T-cell (primary cell): ENCODE measurements at regions of chr19 and their contacts with region 1.

Region 1: DNA sequence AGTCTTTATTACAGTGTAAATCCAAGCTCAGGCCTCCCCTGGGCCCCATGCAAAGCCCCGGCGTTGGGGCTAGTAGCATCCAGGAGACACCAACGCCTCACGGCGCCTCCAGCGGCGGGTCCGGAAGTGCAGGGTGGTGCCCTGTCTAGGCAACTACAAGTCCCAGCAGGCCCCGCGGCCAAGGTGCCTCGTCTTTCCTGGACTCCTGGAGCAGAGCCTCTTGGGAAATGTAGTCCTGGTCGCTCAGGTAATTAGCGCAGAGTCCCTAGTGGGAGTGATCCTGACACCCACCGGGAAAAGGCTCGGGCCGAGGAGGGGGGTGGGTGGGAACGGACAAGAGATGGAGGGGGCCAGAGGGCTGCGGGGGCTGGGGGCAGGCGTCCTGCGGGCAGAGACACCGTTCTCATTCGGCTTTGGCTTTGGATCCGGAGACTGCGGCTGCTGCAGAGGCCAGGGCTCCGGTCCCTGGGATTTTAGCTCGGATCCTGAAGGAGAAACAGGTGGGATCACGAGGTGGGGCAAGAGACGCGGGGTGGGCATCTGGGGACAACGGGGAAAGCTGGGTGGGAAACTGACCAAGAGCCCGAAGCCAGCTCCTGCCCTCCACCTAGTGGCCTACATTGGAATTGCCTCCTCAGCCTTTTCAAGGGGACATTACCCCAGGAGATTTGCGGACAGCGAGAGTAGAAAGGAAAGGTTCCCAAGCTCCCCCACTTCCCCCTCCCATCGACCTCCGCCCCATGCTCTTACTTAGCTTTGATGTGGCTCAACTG is 11.4 kb downstream of the RTN2 start:
- DNase-seq: peak; percentile 91 to 99 (median 97)
- ATAC-seq: peak; percentile 93 to 100 (median 99)
- H3K4me3 ChIP-seq: peak overlapping the region; percentile 69 to 77
- H3K4me3 Mint-ChIP-seq: peak overlapping the region; percentile 86 to 90 (median 87)
- H3K27ac ChIP-seq: no peak overlapping the region
- H3K27ac Mint-ChIP-seq: peak overlapping the region in 1 of 2 donors; percentile 66
- H3K4me1 ChIP-seq: peaks cover 0 to 13% of the 10 kb centered on the region in 2 experiments
- H3K4me1 Mint-ChIP-seq: peaks cover 0 to 7% (median 2%) of the 10 kb centered on the region in 3 donors
- H3K27me3 ChIP-seq: peaks cover 0 to 14% of the 10 kb centered on the region in 2 experiments
- H3K27me3 Mint-ChIP-seq: peaks cover 0 to 1% of the 10 kb centered on the region in 2 donors

Region 2: DNA sequence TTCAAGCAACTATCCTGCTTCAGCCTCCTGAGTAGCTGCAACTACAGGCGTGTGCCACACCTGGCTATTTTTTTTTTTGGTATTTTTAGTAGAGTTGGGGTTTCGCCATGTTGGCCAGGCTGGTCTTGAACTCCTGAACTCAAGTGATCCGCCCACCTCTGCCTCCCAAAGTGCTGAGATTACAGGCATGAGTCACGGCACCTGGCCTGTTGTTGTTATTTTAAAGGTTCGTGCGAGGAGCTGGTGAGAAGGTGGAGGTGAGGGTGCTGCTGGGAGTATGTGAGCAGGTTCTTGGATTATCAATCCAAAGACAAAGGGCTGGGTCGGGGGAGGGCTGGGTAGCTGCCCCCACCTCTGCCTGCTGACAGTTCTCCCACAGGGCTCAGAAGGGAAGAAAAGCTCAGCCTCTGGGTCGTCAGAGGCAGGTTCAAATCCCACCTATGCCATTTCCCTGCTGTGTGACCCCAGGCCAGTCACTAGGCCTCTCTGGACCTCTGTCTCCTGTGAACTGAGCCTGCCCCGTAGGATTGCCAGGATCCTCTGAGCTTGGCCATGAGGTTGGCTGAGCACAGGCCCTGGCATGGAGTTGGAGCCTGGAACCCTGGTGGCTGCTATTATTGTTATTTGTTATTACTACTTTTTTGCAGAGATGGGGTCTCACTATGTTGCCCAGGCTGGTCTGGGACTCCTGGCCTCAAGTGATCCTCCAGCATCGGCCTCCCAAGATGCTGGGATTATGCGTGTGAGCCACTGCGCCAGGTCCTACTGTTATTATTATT is 164.3 kb before region 1 on chr19:
- CTCF ChIA-PET with region 1: no interaction called
- POLR2A ChIA-PET with region 1: no interaction called
- DNase-seq: no peak
- ATAC-seq: no peak
- H3K4me3 ChIP-seq: no peak overlapping the region
- H3K4me3 Mint-ChIP-seq: no peak overlapping the region
- H3K27ac ChIP-seq: no peak overlapping the region
- H3K27ac Mint-ChIP-seq: no peak overlapping the region
- H3K4me1 ChIP-seq: peaks cover 0 to 10% of the 10 kb centered on the region in 2 experiments
- H3K4me1 Mint-ChIP-seq: no peaks in the 10 kb centered on the region
- H3K27me3 ChIP-seq: peaks cover 0 to 78% of the 10 kb centered on the region in 2 experiments
- H3K27me3 Mint-ChIP-seq: peaks cover 32 to 60% of the 10 kb centered on the region in 2 donors

Region 3: GRCh38 chr19:45439569-45440254 is 45.8 kb before region 1 on chr19:
- CTCF ChIA-PET with region 1: interaction called, 20 to 29 read pairs
- POLR2A ChIA-PET with region 1: no interaction called
- DNase-seq: peak; percentile 63 to 92 (median 80)
- ATAC-seq: peak; percentile 67 to 83 (median 80)
- H3K4me3 ChIP-seq: peak overlapping the region; percentile 32 to 49
- H3K4me3 Mint-ChIP-seq: peak overlapping the region; percentile 64 to 77 (median 75)
- H3K27ac ChIP-seq: peak overlapping the region; percentile 69
- H3K27ac Mint-ChIP-seq: peak overlapping the region in 1 of 2 donors; percentile 11
- H3K4me1 ChIP-seq: peaks cover 9 to 44% of the 10 kb centered on the region in 2 experiments
- H3K4me1 Mint-ChIP-seq: peaks cover 28 to 38% (median 34%) of the 10 kb centered on the region in 3 donors
- H3K27me3 ChIP-seq: peaks cover 0 to 7% of the 10 kb centered on the region in 2 experiments
- H3K27me3 Mint-ChIP-seq: no peaks in the 10 kb centered on the region

Region 4: DNA sequence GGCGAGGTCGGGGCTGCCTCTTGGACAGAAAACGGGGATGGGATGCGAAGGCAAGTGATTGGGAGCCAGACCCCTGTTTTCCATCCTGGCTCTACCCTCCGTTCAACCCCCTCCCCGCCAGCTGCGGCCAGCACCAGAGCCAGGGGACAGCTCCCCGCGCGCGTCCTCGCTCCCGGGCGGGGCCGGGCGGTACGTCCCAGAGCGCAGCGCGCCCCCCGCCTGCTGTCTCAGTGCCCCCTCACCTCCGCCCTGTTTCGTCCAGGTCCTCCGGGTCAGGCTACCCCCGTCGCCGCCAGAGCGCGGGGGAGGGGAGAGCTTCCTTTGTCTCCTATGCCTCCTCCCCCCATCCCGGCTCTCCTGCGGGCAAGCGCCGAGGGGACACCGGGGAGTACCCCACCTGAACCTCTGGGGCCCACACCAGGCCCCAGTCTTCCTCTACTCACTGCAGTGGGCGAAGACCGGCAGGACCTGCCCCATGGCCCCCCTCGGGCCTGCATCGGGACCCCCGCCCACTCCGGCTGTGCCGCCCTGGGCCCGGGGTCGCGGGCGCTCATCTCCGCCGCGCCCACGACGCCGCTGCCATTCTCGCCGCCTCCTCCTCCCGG is 11.0 kb after region 1 on chr19:
- CTCF ChIA-PET with region 1: interaction called, 8 to 17 read pairs
- POLR2A ChIA-PET with region 1: interaction called in 1 of 2 experiments, 3 read pairs
- DNase-seq: peak in 15 of 35 experiments; percentile 28 to 63 (median 44)
- ATAC-seq: peak; percentile 25 to 35 (median 30)
- H3K4me3 ChIP-seq: peak overlapping the region; percentile 60 to 84
- H3K4me3 Mint-ChIP-seq: peak overlapping the region; percentile 60 to 91 (median 74)
- H3K27ac ChIP-seq: no peak overlapping the region
- H3K27ac Mint-ChIP-seq: no peak overlapping the region
- H3K4me1 ChIP-seq: peaks cover 16 to 51% of the 10 kb centered on the region in 2 experiments
- H3K4me1 Mint-ChIP-seq: peaks cover 35 to 47% (median 44%) of the 10 kb centered on the region in 3 donors
- H3K27me3 ChIP-seq: peaks cover 12 to 33% of the 10 kb centered on the region in 2 experiments
- H3K27me3 Mint-ChIP-seq: peaks cover 13 to 17% of the 10 kb centered on the region in 2 donors